K562 (cell line): ENCODE measurements at regions of chr7 and their contacts with region 1.

Region 1: GRCh38 chr7:44707561-44708435 is 40.8 kb upstream of the ZMIZ2 start:
- DNase-seq: peak in 2 of 4 experiments; percentile 5 to 7
- ATAC-seq: no peak
- H3K4me3 ChIP-seq: no peak overlapping the region
- H3K27ac ChIP-seq: no peak overlapping the region
- H3K4me1 ChIP-seq: peaks cover 7 to 13% of the 10 kb centered on the region in 2 experiments; a peak in 4 of 5 replicates
- H3K27me3 ChIP-seq: no peaks in the 10 kb centered on the region
- CTCF ChIP-seq: no peak
- EP300 ChIP-seq: no peak
- POLR2A ChIP-seq: no peak
- RAD21 ChIP-seq: no peak

Region 2: DNA sequence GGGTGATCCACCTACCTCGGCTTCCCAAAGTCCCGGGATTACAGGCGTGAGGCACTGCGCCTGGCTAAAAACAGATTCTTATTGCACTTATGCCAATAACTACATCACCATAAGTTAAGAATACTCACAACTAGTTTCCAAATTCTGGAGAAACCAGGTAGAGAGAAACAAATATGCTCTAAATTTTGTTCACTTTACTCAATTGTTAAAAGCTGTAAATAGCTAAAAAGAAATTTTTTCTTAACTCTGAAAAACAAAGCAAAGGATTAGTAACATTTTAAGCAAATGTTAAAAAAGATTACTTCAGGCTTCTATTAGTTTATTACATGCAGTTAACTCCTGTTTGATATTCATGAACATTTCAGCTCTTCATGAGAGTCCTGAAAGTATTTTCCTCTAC is 12.5 kb after region 1 on chr7:
- CTCF ChIA-PET with region 1: no interaction called
- POLR2A ChIA-PET with region 1: interaction called, 13 read pairs
- in situ Hi-C with region 1: no loop called
- intact Hi-C with region 1: no loop called
- DNase-seq: no peak
- ATAC-seq: no peak
- H3K4me3 ChIP-seq: no peak overlapping the region
- H3K27ac ChIP-seq: no peak overlapping the region
- H3K4me1 ChIP-seq: no peaks in the 10 kb centered on the region; a peak in 1 of 5 replicates
- H3K27me3 ChIP-seq: no peaks in the 10 kb centered on the region
- CTCF ChIP-seq: no peak
- EP300 ChIP-seq: no peak
- POLR2A ChIP-seq: no peak
- RAD21 ChIP-seq: no peak

Region 3: GRCh38 chr7:44748045-44748947 is 40.5 kb after region 1 on chr7 and contains the start of gene ZMIZ2:
- CTCF ChIA-PET with region 1: no interaction called
- POLR2A ChIA-PET with region 1: no interaction called
- in situ Hi-C with region 1: no loop called
- intact Hi-C with region 1: no loop called
- DNase-seq: peak; percentile 90 to 98 (median 98)
- ATAC-seq: peak; percentile 90
- H3K4me3 ChIP-seq: peak within 1 kb of the TSS; percentile 76
- H3K27ac ChIP-seq: peak within 1 kb of the TSS; percentile 96
- H3K4me1 ChIP-seq: peaks cover 26 to 33% of the 10 kb centered on the region in 2 experiments; a peak in 4 of 5 replicates
- H3K27me3 ChIP-seq: no peaks in the 10 kb centered on the region
- CTCF ChIP-seq: no peak
- EP300 ChIP-seq: no peak; the same call in 1 of the 2 replicates
- POLR2A ChIP-seq: peak; percentile 66
- RAD21 ChIP-seq: no peak
- polyA plus RNA-seq, gene ZMIZ2: 0.13 to 0.18 TPM